Naive thymus-derived CD8-positive, alpha-beta T cell (primary cell): ENCODE measurements at regions of chr14 and their contacts with region 1.

Region 1: GRCh38 chr14:81220830-81221578 is at the start of gene GTF2A1:
- DNase-seq: peak; percentile 91 to 98 (median 96)
- ATAC-seq: peak; percentile 67 to 70
- H3K4me3 Mint-ChIP-seq: peak within 1 kb of the TSS; percentile 94 to 100 (median 100)
- H3K27ac Mint-ChIP-seq: peak within 1 kb of the TSS; percentile 99 to 100 (median 100)
- H3K4me1 Mint-ChIP-seq: peaks cover 11 to 42% (median 39%) of the 10 kb centered on the region in 4 donors
- H3K27me3 Mint-ChIP-seq: peaks cover 0 to 2% (median 0%) of the 10 kb centered on the region in 5 donors
- polyA plus RNA-seq, gene GTF2A1: 7.2 to 8.9 (median 8.8) TPM

Region 2: DNA sequence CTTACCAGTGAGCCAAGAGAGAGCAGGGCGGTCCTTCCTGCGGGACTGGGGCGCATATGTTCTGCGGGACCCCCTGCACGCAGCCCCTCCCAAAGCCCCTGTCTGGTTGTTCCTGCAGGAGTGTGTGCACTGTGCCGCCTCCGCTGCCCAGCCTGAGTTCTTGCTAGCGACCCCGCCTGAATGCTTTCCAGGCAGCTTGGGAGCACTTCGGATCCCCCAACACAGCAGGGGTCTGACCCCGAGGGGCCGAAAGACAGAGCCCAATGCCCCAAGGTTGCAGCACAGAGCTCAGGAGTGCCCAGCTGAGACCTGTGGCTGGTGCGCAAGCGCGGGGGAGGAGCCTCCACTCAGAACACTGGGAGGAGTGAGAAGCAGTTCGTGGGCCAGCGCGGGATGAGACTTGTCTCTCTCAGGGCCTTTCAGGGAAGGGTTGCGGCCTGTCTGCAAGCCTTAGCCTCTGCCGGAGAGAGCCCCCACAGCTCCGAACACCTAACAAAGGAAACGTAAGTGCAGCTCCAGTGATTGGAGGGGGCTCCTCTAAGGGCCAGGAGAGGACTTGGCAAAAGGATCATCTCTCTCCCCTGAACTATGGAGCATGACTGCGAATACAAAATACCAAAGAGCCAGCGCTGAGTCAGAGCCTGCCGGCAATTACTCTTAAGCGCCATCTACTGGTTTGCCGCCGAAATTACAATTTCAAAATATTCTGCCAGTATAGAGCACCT is 50.7 kb before region 1 on chr14:
- POLR2A ChIA-PET with region 1: interaction called, 24 read pairs
- DNase-seq: peak; percentile 78 to 96 (median 84)
- ATAC-seq: peak; percentile 96 to 98
- H3K4me3 Mint-ChIP-seq: peak overlapping the region; percentile 88 to 97 (median 94)
- H3K27ac Mint-ChIP-seq: peak overlapping the region; percentile 13 to 97 (median 94)
- H3K4me1 Mint-ChIP-seq: peaks cover 13 to 30% (median 24%) of the 10 kb centered on the region in 4 donors
- H3K27me3 Mint-ChIP-seq: no peaks in the 10 kb centered on the region

Region 3: DNA sequence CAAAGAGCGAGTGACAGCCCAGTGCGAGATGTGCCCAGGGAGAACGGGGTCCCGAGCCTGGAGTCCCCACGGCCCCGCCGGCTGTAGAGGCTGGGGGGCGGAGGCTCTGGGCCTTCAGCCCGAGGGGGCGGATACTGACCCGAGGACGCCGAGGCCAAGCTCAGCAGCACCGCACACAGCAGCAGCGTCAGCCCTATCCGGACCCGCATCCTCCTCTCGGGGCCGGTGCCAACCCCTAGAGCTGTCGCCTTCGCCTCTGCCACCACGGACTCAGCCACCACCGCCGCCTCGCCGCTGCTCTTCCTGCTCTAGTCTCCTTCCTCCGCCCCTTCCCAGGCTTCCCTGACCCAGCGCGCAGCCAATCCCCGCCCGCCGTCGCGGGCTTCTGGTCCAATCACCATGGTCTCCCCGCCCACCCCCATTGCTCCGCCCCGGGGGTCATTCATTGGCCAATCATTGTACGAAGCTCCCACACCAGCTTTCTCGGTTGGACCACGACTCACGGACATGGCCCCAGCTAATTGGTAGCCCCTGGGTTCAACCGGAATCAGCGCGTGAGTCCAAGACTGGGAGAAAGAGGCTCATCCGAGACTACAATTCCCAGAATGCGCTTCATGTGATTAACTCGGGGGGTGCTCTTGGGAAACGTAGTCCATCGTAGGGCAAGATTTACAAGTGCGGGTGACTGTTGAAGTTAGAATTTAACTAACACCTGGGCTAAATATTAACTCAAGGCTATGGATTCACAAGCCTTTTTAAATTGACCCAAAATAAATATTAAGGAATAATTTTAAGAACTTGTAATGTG is 312.7 kb after region 1 on chr14 and contains the start of gene SEL1L:
- POLR2A ChIA-PET with region 1: interaction called, 30 read pairs
- DNase-seq: peak; percentile 96 to 100 (median 99)
- ATAC-seq: peak; percentile 95 to 96
- H3K4me3 Mint-ChIP-seq: peak within 1 kb of the TSS; percentile 90 to 99 (median 96)
- H3K27ac Mint-ChIP-seq: peak within 1 kb of the TSS; percentile 88 to 96 (median 93)
- H3K4me1 Mint-ChIP-seq: peaks cover 13 to 66% (median 61%) of the 10 kb centered on the region in 4 donors
- H3K27me3 Mint-ChIP-seq: peaks cover 0 to 6% (median 3%) of the 10 kb centered on the region in 5 donors
- polyA plus RNA-seq, gene SEL1L: 12.0 to 22.9 (median 16.2) TPM